Activated CD4-positive, alpha-beta T cell treated with anti-CD3 and anti-CD28 coated beads for 36 hours (primary cell): ENCODE measurements at regions of chr20 and their contacts with region 1.

Region 1: GRCh38 chr20:37081717-37082289 is 14.0 kb downstream of the RBL1 start:
- DNase-seq: peak; percentile 32
- ATAC-seq: no peak
- H3K4me3 Mint-ChIP-seq: no peak overlapping the region
- H3K27ac Mint-ChIP-seq: no peak overlapping the region
- H3K4me1 Mint-ChIP-seq: peaks cover 22% of the 10 kb centered on the region
- H3K27me3 Mint-ChIP-seq: no peaks in the 10 kb centered on the region

Region 2: GRCh38 chr20:37007898-37008649 is 73.7 kb before region 1 on chr20:
- CTCF ChIA-PET with region 1: no interaction called
- POLR2A ChIA-PET with region 1: no interaction called
- intact Hi-C with region 1: loop called (anchors 2 kb)
- DNase-seq: no peak
- ATAC-seq: peak; percentile 79
- H3K4me3 Mint-ChIP-seq: no peak overlapping the region
- H3K27ac Mint-ChIP-seq: peak overlapping the region; percentile 15
- H3K4me1 Mint-ChIP-seq: peaks cover 13% of the 10 kb centered on the region
- H3K27me3 Mint-ChIP-seq: no peaks in the 10 kb centered on the region

Region 3: GRCh38 chr20:37123441-37123840 is 41.6 kb after region 1 on chr20:
- CTCF ChIA-PET with region 1: no interaction called
- POLR2A ChIA-PET with region 1: no interaction called
- intact Hi-C with region 1: no loop called
- DNase-seq: no peak
- ATAC-seq: no peak
- H3K4me3 Mint-ChIP-seq: no peak overlapping the region
- H3K27ac Mint-ChIP-seq: no peak overlapping the region
- H3K4me1 Mint-ChIP-seq: no peaks in the 10 kb centered on the region
- H3K27me3 Mint-ChIP-seq: no peaks in the 10 kb centered on the region